ENCODE measurements at regions of chr6 and their contacts with region 1.

Region 1: GRCh38 chr6:28981833-28982475 is 23.2 kb downstream of the ZNF311 start:
- DNase-seq: peak; percentile 74
- H3K4me3 ChIP-seq: peak overlapping the region; percentile 54 to 58
- H3K27ac ChIP-seq: peak overlapping the region; percentile 71 to 73
- H3K4me1 ChIP-seq: no peaks in the 10 kb centered on the region
- H3K27me3 ChIP-seq: no peaks in the 10 kb centered on the region
- CTCF ChIP-seq: peak in 2 of 4 experiments; percentile 21 to 23
- POLR2A ChIP-seq: no peak

Region 2: GRCh38 chr6:27472617-27473400 is 1509.1 kb before region 1 on chr6 and contains the start of gene ZNF184:
- intact Hi-C with region 1: loop called (anchors 10 kb)
- DNase-seq: peak; percentile 96
- H3K4me3 ChIP-seq: peak within 1 kb of the TSS; percentile 63 to 80
- H3K27ac ChIP-seq: peak within 1 kb of the TSS; percentile 92 to 94
- H3K4me1 ChIP-seq: no peaks in the 10 kb centered on the region
- H3K27me3 ChIP-seq: no peaks in the 10 kb centered on the region
- CTCF ChIP-seq: peak in 3 of 4 experiments; percentile 4 to 19 (median 9)
- POLR2A ChIP-seq: peak; percentile 70
- total RNA-seq, gene ZNF184: 6.2 to 8.2 TPM

Region 3: DNA sequence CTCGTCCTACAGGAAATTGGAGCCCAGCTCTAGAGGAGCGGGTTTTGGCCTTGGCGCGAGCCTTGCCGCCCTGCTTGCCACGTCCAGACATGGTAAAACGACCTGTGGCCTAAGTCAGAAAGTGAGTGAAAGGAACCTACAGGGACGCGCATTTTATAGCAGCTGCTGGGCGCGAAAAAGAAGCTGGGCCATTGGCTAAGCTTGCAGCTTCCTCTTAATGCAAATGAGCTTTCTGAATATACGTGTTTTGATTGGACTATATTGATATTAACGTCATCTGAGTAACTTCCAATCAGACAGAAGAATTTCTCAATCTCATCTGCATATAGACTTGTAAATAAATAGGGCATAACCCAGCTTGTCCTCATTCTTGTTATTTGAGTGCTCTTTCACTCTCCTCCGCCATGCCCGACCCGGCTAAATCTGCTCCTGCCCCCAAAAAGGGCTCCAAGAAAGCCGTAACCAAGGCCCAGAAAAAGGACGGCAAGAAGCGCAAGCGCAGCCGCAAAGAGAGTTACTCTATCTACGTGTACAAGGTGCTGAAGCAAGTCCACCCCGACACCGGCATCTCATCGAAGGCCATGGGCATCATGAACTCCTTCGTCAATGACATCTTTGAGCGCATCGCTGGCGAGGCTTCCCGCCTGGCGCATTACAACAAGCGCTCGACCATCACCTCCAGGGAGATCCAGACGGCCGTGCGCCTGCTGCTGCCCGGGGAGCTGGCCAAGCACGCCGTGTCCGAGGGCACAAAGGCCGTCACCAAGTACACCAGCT is 1088.7 kb before region 1 on chr6:
- intact Hi-C with region 1: loop called (anchors 10 kb)
- DNase-seq: peak; percentile 89
- H3K4me3 ChIP-seq: peak overlapping the region; percentile 46 to 47
- H3K27ac ChIP-seq: peak overlapping the region; percentile 72 to 80
- H3K4me1 ChIP-seq: no peaks in the 10 kb centered on the region
- H3K27me3 ChIP-seq: no peaks in the 10 kb centered on the region
- CTCF ChIP-seq: peak in 1 of 4 experiments; percentile 7
- POLR2A ChIP-seq: peak; percentile 90

Region 4: GRCh38 chr6:28895134-28895812 is 86.7 kb before region 1 on chr6:
- intact Hi-C with region 1: loop called (anchors 10 kb)
- DNase-seq: peak; percentile 93
- H3K4me3 ChIP-seq: peak overlapping the region; percentile 53 to 55
- H3K27ac ChIP-seq: peak overlapping the region; percentile 94 to 99
- H3K4me1 ChIP-seq: no peaks in the 10 kb centered on the region
- H3K27me3 ChIP-seq: no peaks in the 10 kb centered on the region
- CTCF ChIP-seq: peak in 1 of 4 experiments; percentile 4
- POLR2A ChIP-seq: peak; percentile 70

Region 5: GRCh38 chr6:28940858-28941680 is 40.9 kb before region 1 on chr6:
- intact Hi-C with region 1: loop called (anchors 2 kb)
- DNase-seq: peak; percentile 74
- H3K4me3 ChIP-seq: peak overlapping the region; percentile 48 to 49
- H3K27ac ChIP-seq: peak overlapping the region; percentile 79 to 80
- H3K4me1 ChIP-seq: no peaks in the 10 kb centered on the region
- H3K27me3 ChIP-seq: no peaks in the 10 kb centered on the region
- CTCF ChIP-seq: no peak
- POLR2A ChIP-seq: no peak

Region 6: GRCh38 chr6:29016559-29017427 is 34.8 kb after region 1 on chr6:
- intact Hi-C with region 1: loop called (anchors 5 kb)
- DNase-seq: peak; percentile 86
- H3K4me3 ChIP-seq: peak overlapping the region; percentile 31 to 47
- H3K27ac ChIP-seq: peak overlapping the region; percentile 37 to 54
- H3K4me1 ChIP-seq: no peaks in the 10 kb centered on the region
- H3K27me3 ChIP-seq: no peaks in the 10 kb centered on the region
- CTCF ChIP-seq: peak; percentile 71 to 87 (median 80)
- POLR2A ChIP-seq: no peak